ENCODE measurements at regions of chr19 and their contacts with region 1.

Region 1: GRCh38 chr19:4400135-4400936 is at the start of gene SH3GL1:
- DNase-seq: peak; percentile 95
- ATAC-seq: peak; percentile 54
- H3K4me3 Mint-ChIP-seq: peak within 1 kb of the TSS; percentile 93
- H3K27ac Mint-ChIP-seq: peak within 1 kb of the TSS; percentile 95
- H3K4me1 Mint-ChIP-seq: peaks cover 62% of the 10 kb centered on the region
- H3K27me3 Mint-ChIP-seq: no peaks in the 10 kb centered on the region
- total RNA-seq, gene SH3GL1: 42.0 to 46.8 TPM

Region 2: GRCh38 chr19:3970808-3971598 is 429.3 kb before region 1 on chr19 and contains the start of gene DAPK3:
- CTCF ChIA-PET with region 1: no interaction called
- POLR2A ChIA-PET with region 1: no interaction called
- intact Hi-C with region 1: loop called in 1 of 2 experiments (anchors 1 kb)
- DNase-seq: peak; percentile 97
- ATAC-seq: peak; percentile 95
- H3K4me3 Mint-ChIP-seq: peak within 1 kb of the TSS; percentile 83
- H3K27ac Mint-ChIP-seq: peak within 1 kb of the TSS; percentile 58
- H3K4me1 Mint-ChIP-seq: peaks cover 22% of the 10 kb centered on the region
- H3K27me3 Mint-ChIP-seq: no peaks in the 10 kb centered on the region
- total RNA-seq, gene DAPK3: 26.7 to 27.6 TPM

Region 3: DNA sequence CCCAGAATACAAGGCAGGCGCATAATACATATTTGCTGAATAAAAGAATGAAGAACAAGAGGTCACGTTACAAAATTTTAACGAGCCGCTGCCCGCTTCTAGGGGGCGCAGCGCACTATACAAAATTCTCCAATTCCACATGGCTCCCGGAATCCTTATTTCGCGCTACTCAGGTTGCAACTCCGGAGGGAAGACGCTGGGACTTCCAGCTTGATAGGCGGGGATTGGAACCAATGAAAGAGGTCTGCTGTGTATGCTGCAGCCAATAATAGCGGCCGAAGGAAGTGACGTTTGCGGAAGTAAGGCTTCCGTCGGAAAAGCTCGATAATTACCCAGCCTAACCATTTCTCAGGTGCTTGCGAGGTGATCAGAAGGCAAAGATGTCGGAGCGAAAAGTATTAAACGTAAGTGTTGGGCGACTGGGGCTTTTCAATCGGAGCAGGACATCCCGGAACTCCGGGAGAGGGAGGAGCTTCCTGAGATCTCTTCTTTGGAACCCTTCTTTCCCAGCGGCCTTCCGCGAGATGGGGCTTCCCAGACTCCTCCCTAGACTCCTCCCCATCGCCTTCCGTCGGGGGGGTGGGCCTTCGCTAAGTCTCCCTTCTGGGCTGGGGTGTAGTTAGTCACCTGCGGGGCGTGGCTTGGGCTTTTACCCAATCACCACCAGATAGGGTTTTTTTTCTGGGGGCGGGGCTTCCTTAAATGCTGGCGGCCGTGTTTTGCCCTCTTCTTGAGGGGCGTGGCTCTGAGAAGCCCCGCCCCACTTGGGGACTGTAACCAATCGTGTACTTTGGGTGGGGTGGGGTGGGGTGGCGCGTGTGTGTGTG is 153.4 kb before region 1 on chr19 and contains the start of gene YJU2:
- CTCF ChIA-PET with region 1: interaction called, 4 read pairs
- POLR2A ChIA-PET with region 1: interaction called, 8 read pairs
- intact Hi-C with region 1: loop called (anchors 1 kb)
- DNase-seq: peak; percentile 100
- ATAC-seq: peak; percentile 97
- H3K4me3 Mint-ChIP-seq: peak within 1 kb of the TSS; percentile 84
- H3K27ac Mint-ChIP-seq: peak within 1 kb of the TSS; percentile 100
- H3K4me1 Mint-ChIP-seq: peaks cover 9% of the 10 kb centered on the region
- H3K27me3 Mint-ChIP-seq: no peaks in the 10 kb centered on the region
- total RNA-seq, gene YJU2: 29.8 to 34.8 TPM

Region 4: GRCh38 chr19:4342615-4343369 is 57.5 kb before region 1 on chr19:
- CTCF ChIA-PET with region 1: interaction called, 6 read pairs
- POLR2A ChIA-PET with region 1: interaction called, 8 read pairs
- intact Hi-C with region 1: loop called in 1 of 2 experiments (anchors 1 kb)
- DNase-seq: peak; percentile 97
- ATAC-seq: peak; percentile 91
- H3K4me3 Mint-ChIP-seq: peak overlapping the region; percentile 89
- H3K27ac Mint-ChIP-seq: peak overlapping the region; percentile 93
- H3K4me1 Mint-ChIP-seq: peaks cover 17% of the 10 kb centered on the region
- H3K27me3 Mint-ChIP-seq: no peaks in the 10 kb centered on the region

Region 5: GRCh38 chr19:4471403-4472173 is 71.3 kb after region 1 on chr19:
- CTCF ChIA-PET with region 1: interaction called, 5 read pairs
- POLR2A ChIA-PET with region 1: interaction called, 4 read pairs
- intact Hi-C with region 1: loop called in 1 of 2 experiments (anchors 1 kb)
- DNase-seq: peak; percentile 98
- ATAC-seq: peak; percentile 90
- H3K4me3 Mint-ChIP-seq: no peak overlapping the region
- H3K27ac Mint-ChIP-seq: no peak overlapping the region
- H3K4me1 Mint-ChIP-seq: peaks cover 21% of the 10 kb centered on the region
- H3K27me3 Mint-ChIP-seq: no peaks in the 10 kb centered on the region

Region 6: GRCh38 chr19:4518345-4519171 is 118.2 kb after region 1 on chr19 and contains the start of gene PLIN4:
- CTCF ChIA-PET with region 1: no interaction called
- POLR2A ChIA-PET with region 1: no interaction called
- intact Hi-C with region 1: no loop called
- DNase-seq: no peak
- ATAC-seq: no peak
- H3K4me3 Mint-ChIP-seq: no peak within 1 kb of the TSS
- H3K27ac Mint-ChIP-seq: no peak within 1 kb of the TSS
- H3K4me1 Mint-ChIP-seq: no peaks in the 10 kb centered on the region
- H3K27me3 Mint-ChIP-seq: no peaks in the 10 kb centered on the region
- total RNA-seq, gene PLIN4: not detected

Region 7: DNA sequence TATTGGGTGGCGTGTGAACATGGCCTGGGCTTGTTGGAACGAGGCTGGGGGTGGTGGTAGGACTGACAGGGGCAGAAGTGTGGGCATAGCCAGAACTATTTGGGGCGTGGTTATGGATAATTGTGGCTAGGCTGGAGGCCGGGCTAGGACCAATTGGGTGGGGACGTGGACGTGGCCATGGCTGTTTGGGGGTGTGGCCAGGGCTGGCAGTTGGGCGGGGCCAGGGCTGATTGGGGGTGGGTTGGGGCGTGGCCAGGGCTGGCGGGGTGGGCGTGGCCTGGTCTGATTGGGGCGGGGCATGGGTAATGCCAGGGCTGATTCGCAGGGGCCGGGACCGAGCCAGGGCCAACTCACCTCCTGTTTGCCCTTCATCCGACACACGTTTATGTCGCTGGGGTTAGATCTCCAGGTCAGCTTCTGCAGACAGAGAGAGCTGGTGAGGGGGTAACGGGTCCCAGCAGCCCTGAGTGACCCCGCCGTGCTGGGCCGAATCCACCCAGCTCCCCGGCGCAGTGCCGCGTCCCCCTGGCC is 156.3 kb after region 1 on chr19:
- CTCF ChIA-PET with region 1: no interaction called
- POLR2A ChIA-PET with region 1: no interaction called
- intact Hi-C with region 1: no loop called
- DNase-seq: peak; percentile 70
- ATAC-seq: peak; percentile 66
- H3K4me3 Mint-ChIP-seq: no peak overlapping the region
- H3K27ac Mint-ChIP-seq: no peak overlapping the region
- H3K4me1 Mint-ChIP-seq: no peaks in the 10 kb centered on the region
- H3K27me3 Mint-ChIP-seq: peaks cover 8% of the 10 kb centered on the region

Region 8: DNA sequence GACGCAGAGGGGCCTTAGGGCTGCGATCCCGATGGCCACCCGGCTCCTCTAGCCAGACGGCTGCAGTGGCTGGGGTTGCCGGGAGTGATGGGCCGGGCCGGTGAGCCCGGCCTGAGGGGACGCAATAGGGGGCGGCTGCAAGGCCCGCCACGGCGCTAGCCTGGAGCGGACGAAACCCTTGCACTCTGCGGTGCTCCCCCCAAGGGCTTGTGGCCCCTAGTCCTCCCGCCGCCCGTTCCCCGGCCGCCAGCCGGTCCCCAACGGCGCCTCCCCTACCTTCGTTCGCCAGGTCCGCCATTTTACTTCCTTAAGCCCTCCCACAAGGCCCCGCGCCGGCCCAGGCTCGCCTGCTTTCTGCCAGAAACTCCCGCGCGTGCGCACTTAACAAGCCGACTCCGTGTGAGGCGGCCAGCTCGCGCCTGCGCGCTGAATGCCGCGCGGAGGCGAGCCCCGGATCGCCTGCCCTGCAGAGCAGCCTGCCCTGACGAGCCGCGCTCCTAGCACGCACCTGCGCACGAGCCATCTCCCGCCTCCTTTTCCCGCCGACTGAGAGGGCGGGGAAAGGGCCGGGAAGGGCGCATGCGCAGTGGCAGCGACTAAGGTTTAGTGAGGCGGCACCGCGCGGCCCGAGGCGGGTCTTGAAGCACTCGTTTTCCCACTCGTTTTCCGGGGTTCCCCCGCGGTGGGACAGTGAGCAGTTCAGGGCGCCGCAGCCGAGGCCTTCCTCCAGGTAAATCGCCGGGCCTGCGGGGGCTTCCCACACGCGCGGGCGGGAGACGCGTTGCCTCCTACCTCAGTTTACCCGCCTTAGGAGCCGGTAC is 1577.7 kb after region 1 on chr19 and contains the start of gene RANBP3:
- CTCF ChIA-PET with region 1: no interaction called
- POLR2A ChIA-PET with region 1: no interaction called
- intact Hi-C with region 1: loop called in 1 of 2 experiments (anchors 5 kb)
- DNase-seq: peak; percentile 99
- ATAC-seq: peak; percentile 92
- H3K4me3 Mint-ChIP-seq: peak within 1 kb of the TSS; percentile 94
- H3K27ac Mint-ChIP-seq: peak within 1 kb of the TSS; percentile 90
- H3K4me1 Mint-ChIP-seq: peaks cover 56% of the 10 kb centered on the region
- H3K27me3 Mint-ChIP-seq: no peaks in the 10 kb centered on the region
- total RNA-seq, gene RANBP3: 85.5 to 103 TPM

Measured in activated CD4-positive, alpha-beta T cell treated with anti-CD3 and anti-CD28 coated beads for 36 hours (primary cell).